ENCODE measurements at regions of chr14 and their contacts with region 1.

Region 1: GRCh38 chr14:34671716-34672115 is 41.8 kb upstream of the SNX6 start:
- DNase-seq: peak; percentile 19
- H3K4me3 ChIP-seq: no peak overlapping the region
- H3K27ac ChIP-seq: peak overlapping the region; percentile 8
- H3K4me1 ChIP-seq: peaks cover 24% of the 10 kb centered on the region
- CTCF ChIP-seq: no peak

Region 2: GRCh38 chr14:34722717-34723545 is 51.2 kb after region 1 on chr14:
- CTCF ChIA-PET with region 1: interaction called, 9 read pairs
- POLR2A ChIA-PET with region 1: interaction called, 4 read pairs
- intact Hi-C with region 1: loop called (anchors 1 kb)
- DNase-seq: peak; percentile 57
- H3K4me3 ChIP-seq: no peak overlapping the region
- H3K27ac ChIP-seq: no peak overlapping the region
- H3K4me1 ChIP-seq: peaks cover 7% of the 10 kb centered on the region
- CTCF ChIP-seq: peak; percentile 88

Region 3: DNA sequence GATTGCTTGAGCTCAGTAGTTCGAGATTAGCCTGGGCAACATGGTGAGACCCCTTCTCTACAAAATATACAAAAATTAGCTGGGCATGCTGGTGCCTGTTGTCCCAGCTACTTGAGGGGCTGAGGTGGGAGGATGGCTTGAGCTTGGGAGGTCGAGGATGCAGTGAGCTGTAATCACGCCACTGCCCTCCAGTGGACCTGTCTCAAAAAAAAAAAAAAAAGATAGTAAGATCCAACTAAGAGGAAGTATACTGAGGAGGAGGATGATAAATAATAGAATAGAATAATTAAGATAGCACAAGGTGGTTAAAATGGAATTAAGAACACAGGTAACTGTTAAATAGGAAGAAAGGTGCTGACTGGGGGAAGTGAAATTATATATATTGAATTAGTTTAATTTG is 240.5 kb after region 1 on chr14:
- CTCF ChIA-PET with region 1: no interaction called
- POLR2A ChIA-PET with region 1: interaction called, 5 read pairs
- intact Hi-C with region 1: loop called (anchors 5 kb)
- DNase-seq: peak; percentile 41
- H3K4me3 ChIP-seq: no peak overlapping the region
- H3K27ac ChIP-seq: no peak overlapping the region
- H3K4me1 ChIP-seq: peaks cover 19% of the 10 kb centered on the region
- CTCF ChIP-seq: peak; percentile 73

Region 4: GRCh38 chr14:35414365-35414764 is 742.6 kb after region 1 on chr14:
- CTCF ChIA-PET with region 1: no interaction called
- POLR2A ChIA-PET with region 1: interaction called, 3 read pairs
- intact Hi-C with region 1: loop called (anchors 5 kb)
- DNase-seq: no peak
- H3K4me3 ChIP-seq: no peak overlapping the region
- H3K27ac ChIP-seq: no peak overlapping the region
- H3K4me1 ChIP-seq: peaks cover 17% of the 10 kb centered on the region
- CTCF ChIP-seq: no peak

Measured in OCI-LY7 (cell line).